Cardiac septum (tissue), 1 donor: ENCODE measurements at regions of chr6 and their contacts with region 1.

Region 1: GRCh38 chr6:160930547-160931377 is 60.8 kb upstream of the MAP3K4 start:
- DNase-seq: peak; percentile 85

Region 2: DNA sequence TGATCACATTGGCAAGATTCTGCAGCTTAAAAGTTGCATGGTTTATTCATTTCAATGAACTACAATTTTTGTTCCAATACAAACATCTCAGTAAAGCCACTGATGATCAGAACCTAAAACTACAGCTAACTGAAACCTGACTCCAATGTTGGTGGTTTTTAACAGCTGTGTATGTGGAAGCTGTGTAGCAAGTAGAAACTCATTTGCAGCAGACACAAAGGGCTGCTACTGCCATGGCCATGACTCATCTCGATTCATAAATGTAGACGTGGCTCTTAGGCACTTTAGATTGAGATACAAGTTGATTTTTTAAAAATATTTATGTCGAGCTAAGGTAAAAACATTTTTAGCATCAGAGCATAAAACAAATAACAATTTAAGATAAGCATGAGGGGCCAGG is 41.3 kb after region 1 on chr6:
- intact Hi-C with region 1: loop called (anchors 5 kb)
- DNase-seq: no peak

Region 3: GRCh38 chr6:160992061-160992979 is 61.6 kb after region 1 on chr6:
- intact Hi-C with region 1: loop called (anchors 1 kb)
- DNase-seq: peak; percentile 86

Region 4: GRCh38 chr6:161079566-161080262 is 149.0 kb after region 1 on chr6:
- intact Hi-C with region 1: loop called (anchors 5 kb)
- DNase-seq: no peak